ENCODE measurements at regions of chr4 and their contacts with region 1.

Region 1: GRCh38 chr4:184733654-184734524 is at the start of gene CENPU:
- DNase-seq: peak; percentile 97
- ATAC-seq: peak; percentile 97
- H3K4me3 Mint-ChIP-seq: peak within 1 kb of the TSS; percentile 99
- H3K27ac Mint-ChIP-seq: peak within 1 kb of the TSS; percentile 96
- H3K4me1 Mint-ChIP-seq: peaks cover 28% of the 10 kb centered on the region
- H3K27me3 Mint-ChIP-seq: no peaks in the 10 kb centered on the region
- total RNA-seq, gene CENPU: 46.0 to 50.1 TPM

Region 2: GRCh38 chr4:184668511-184669114 is 65.3 kb before region 1 on chr4:
- POLR2A ChIA-PET with region 1: interaction called, 11 read pairs
- DNase-seq: no peak
- ATAC-seq: peak; percentile 90
- H3K4me3 Mint-ChIP-seq: peak overlapping the region; percentile 31
- H3K27ac Mint-ChIP-seq: peak overlapping the region; percentile 90
- H3K4me1 Mint-ChIP-seq: peaks cover 31% of the 10 kb centered on the region
- H3K27me3 Mint-ChIP-seq: no peaks in the 10 kb centered on the region

Region 3: GRCh38 chr4:184705692-184706091 is 28.2 kb before region 1 on chr4:
- POLR2A ChIA-PET with region 1: no interaction called
- DNase-seq: no peak
- ATAC-seq: peak; percentile 46
- H3K4me3 Mint-ChIP-seq: peak overlapping the region; percentile 33
- H3K27ac Mint-ChIP-seq: peak overlapping the region; percentile 72
- H3K4me1 Mint-ChIP-seq: peaks cover 19% of the 10 kb centered on the region
- H3K27me3 Mint-ChIP-seq: no peaks in the 10 kb centered on the region

Region 4: DNA sequence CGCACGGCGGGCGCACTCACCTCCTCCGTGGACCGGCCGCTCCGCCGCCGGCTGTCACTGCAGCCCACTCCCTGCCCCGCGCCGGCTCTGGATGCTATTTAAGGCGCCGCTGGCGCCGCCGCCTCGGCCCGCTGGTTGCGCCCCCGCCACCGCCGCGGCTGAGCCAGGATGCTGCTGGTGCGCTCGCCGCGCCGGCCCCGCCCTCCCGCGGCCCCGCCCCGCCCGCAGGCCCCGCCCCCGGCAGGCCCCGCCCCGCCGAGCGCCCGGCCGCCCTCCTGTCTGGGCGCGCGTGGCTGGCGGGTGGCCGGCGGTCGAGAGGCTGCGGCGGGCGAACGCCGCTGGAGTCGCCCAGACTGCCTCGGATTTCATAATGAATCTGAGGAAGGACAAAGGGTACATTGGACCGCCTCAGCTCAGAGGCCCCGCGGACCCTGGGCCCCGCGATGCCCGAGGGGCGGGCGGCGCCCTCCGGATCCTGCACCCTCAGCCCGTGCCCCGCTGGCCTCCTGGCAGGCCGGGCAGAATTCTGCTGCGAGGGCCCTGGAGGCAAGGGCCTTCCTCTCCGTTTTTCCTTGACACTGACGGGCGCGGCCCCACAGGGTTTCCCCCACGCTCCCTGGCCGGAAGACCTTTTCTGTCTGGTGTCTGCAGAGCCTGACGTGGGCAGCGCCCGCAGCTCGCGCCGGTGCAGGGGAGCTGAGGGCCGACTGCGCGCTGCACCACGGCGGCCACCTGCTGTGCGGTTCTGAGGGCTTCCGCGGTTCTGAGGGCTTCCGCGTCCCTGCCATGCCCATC is 92.2 kb after region 1 on chr4 and contains the start of gene ACSL1:
- POLR2A ChIA-PET with region 1: interaction called, 11 read pairs
- DNase-seq: peak; percentile 85
- ATAC-seq: peak; percentile 76
- H3K4me3 Mint-ChIP-seq: peak within 1 kb of the TSS; percentile 89
- H3K27ac Mint-ChIP-seq: peak within 1 kb of the TSS; percentile 83
- H3K4me1 Mint-ChIP-seq: peaks cover 25% of the 10 kb centered on the region
- H3K27me3 Mint-ChIP-seq: peaks cover 22% of the 10 kb centered on the region
- total RNA-seq, gene ACSL1: 10.9 to 12.4 TPM

Measured in activated naive CD8-positive, alpha-beta T cell treated with anti-CD3 and anti-CD28 coated beads, Interleukin-2, amount 10 ng/mL, durations not matched to agents 7 days and 5 days (primary cell).